Activated naive CD4-positive, alpha-beta T cell treated with anti-CD3 and anti-CD28 coated beads, Interleukin-2, amount 10 ng/mL, durations not matched to agents 7 days and 5 days (primary cell): ENCODE measurements at regions of chr3 and their contacts with region 1.

Region 1: DNA sequence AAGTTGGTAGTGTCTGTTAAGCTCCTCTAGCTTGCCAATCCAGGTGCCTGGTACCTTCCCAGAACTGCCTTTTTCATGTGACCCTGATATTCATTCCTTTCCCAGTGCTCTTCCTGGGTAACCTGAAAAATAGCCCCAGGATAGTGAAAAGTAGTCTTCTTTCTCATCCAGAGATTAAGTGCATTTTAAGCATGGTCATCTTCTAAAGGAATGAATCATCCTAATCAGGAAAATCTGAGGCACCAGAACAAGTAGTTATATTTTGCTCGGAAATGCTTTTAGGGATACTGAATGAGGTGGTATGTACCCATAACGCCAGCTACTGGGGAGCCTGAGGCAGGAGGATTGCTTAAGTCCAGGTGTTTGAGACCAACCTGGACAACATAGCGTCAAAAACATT is 23.1 kb upstream of the PDCD6IP start:
- DNase-seq: no peak
- H3K4me3 Mint-ChIP-seq: no peak overlapping the region
- H3K27ac Mint-ChIP-seq: no peak overlapping the region
- H3K4me1 Mint-ChIP-seq: no peaks in the 10 kb centered on the region
- H3K27me3 Mint-ChIP-seq: peaks cover 6% of the 10 kb centered on the region

Region 2: DNA sequence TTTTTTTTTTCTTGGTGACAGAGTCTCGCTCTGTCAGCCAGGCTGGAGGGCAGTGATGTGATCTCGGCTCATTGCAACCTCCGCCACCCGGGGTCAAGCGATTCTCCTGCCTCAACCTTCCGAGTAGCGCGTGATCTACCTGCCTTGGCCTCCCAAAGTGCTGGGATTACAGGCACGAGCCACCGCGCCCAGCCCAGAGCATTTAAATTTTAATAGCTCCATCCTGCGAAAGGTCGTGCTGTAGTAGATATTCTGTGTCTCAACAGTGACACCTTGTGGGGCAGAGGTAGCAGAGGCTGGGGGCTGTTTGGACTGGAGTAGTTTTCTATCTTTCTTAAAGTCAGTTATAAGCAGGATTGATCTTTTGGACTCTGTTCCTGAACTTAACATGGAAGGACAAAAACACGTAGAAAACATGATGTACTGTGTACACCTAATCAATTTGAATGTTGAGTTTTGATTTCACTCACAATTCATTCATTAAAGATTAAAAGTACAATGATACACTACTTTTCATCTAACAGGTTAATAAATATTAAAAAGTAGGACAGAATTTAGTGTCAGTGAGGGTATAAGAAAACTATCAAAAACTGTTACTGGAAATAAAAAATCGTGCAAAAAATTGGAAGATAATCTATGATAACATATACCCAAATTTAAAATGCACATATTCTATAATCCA is 12.1 kb after region 1 on chr3:
- CTCF ChIA-PET with region 1: interaction called, 19 read pairs
- DNase-seq: peak; percentile 67
- H3K4me3 Mint-ChIP-seq: no peak overlapping the region
- H3K27ac Mint-ChIP-seq: no peak overlapping the region
- H3K4me1 Mint-ChIP-seq: peaks cover 4% of the 10 kb centered on the region
- H3K27me3 Mint-ChIP-seq: peaks cover 27% of the 10 kb centered on the region

Region 3: DNA sequence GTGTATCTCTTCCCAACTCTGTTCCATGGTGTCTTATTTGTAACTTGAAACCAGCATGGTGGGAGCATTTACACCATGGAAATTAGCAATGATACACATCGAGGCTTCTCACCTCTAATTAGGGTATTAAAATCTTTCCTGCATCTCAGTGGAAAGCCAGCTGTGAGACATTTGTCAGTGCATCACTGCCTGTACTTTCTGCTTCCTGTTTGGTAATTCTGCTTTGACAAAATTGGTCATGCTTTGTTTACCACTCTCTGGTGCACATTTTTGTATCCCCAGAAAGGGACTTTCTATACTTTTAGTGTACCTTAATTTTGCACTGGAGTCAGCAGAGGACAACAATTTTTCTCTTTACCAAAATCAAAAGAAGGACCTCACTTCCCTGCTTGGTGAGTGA is 425.2 kb after region 1 on chr3:
- CTCF ChIA-PET with region 1: no interaction called
- DNase-seq: no peak
- H3K4me3 Mint-ChIP-seq: no peak overlapping the region
- H3K27ac Mint-ChIP-seq: no peak overlapping the region
- H3K4me1 Mint-ChIP-seq: no peaks in the 10 kb centered on the region
- H3K27me3 Mint-ChIP-seq: peaks cover 4% of the 10 kb centered on the region